ENCODE measurements at regions of chr2 and their contacts with region 1.

Region 1: DNA sequence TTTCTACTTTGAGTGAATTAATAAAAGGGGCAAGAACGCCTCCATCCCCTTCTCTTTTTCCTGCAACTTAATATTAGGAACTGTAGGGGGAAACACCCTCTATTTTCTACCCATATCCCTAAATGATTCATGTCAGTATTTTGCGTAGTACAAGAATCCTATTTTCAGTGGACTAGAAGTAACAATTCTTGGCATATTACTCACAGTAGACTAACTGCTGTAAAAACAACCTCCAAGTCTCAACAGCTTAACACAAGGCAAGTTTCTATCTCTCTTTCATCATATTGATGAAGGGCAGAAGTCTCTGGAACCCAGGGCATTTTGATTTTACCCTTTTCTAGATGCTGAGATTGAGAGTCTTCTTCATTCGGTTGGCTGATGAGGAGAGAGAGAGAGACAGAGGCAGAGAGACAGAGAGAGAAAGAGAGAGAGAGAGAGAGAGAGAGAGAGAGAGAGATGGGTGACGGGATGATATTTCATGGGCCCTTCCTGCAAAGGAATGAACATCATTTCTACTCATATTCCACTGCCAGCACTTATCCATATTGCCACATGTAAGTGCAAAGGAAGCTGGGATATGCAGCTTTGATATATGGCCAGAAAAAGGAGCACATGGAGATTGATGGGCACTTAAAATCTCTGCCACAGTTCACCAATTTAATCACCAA is 481.6 kb downstream of the LPIN1 start:
- DNase-seq: no peak
- ATAC-seq: no peak
- H3K4me3 ChIP-seq: no peak overlapping the region
- H3K27ac ChIP-seq: no peak overlapping the region
- H3K4me1 ChIP-seq: no peaks in the 10 kb centered on the region
- H3K27me3 ChIP-seq: no peaks in the 10 kb centered on the region
- CTCF ChIP-seq: no peak

Region 2: DNA sequence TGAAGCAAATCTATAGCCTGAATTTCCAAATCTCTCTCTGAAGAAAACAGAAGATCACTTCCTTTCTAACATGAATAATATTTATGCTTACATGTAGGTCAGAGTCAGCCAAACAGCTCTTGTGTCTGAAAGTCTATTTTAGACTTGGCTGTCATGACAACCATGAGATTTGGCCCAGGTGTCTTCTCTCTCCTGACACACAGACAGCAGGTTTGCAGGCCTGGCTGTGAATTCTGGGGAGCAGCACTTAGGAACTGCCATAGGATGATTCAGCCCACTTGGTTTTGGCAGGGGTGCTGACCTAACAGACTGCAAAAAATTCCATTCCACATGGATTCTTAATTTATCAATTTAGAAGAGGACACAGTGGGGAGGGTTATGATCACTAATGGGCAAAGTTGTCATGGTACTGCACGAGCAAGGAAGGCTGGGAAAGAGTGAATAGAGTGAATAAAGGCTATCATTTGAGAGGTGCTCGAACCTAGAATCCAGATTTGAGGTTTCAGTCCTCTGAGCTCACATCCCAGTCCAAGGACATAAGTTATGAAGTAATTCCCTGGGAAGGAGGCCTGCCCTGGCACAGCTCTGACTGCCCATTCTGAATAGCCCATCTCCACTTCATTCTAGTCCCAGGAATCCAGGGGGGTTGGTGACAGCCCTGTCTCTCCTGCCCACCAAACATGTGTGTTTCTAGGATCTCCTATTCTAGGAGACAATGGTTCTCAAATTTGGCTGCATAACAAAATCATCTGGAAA is 34.8 kb after region 1 on chr2:
- intact Hi-C with region 1: loop called in 1 of 10 experiments (anchors 5 kb)
- DNase-seq: peak in 1 of 2 donors; percentile 17
- ATAC-seq: peak in 7 of 8 donors; percentile 30 to 76 (median 65)
- H3K4me3 ChIP-seq: no peak overlapping the region
- H3K27ac ChIP-seq: peak overlapping the region in 1 of 10 donors; percentile 17
- H3K4me1 ChIP-seq: peaks cover 0 to 26% (median 14%) of the 10 kb centered on the region in 9 donors
- H3K27me3 ChIP-seq: no peaks in the 10 kb centered on the region
- CTCF ChIP-seq: no peak

Region 3: DNA sequence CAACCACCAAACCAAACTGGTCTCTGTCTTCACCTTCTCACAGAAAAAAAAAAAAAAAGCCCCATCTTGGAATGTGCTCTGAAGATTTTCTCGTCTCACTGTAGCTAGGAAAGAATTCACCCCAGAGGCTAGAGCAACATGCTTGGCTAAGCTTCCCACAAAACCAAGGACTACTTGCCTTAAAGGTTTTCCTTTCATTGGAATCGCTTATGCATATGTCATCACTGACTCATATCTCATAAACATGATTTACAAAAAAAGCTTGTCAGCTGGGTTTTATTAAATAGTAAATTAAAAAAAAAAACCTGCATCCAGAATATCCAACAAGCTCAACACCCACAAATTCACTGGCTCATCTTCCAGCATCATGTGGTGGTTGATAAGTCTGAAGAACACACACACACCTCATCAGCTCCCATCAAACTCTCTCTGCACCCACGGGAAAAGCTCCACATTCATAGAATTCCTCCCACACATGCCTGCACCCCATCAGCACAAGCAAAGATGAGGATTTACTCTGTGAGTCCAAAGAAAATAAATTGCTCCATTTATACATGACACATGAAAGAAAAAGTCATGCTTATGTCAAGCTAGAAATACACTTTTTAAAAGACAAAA is 306.7 kb after region 1 on chr2:
- intact Hi-C with region 1: loop called in 1 of 10 experiments (anchors 10 kb)
- DNase-seq: no peak
- ATAC-seq: peak in 7 of 8 donors; percentile 38 to 79 (median 69)
- H3K4me3 ChIP-seq: no peak overlapping the region
- H3K27ac ChIP-seq: peak overlapping the region in 3 of 10 donors; percentile 22 to 36 (median 34)
- H3K4me1 ChIP-seq: peaks cover 0 to 32% (median 15%) of the 10 kb centered on the region in 9 donors
- H3K27me3 ChIP-seq: no peaks in the 10 kb centered on the region
- CTCF ChIP-seq: no peak

Measured in heart right ventricle (tissue), 16 donors.